Psoas muscle (tissue), 8 donors: ENCODE measurements at regions of chr2 and their contacts with region 1.

Region 1: GRCh38 chr2:80281049-80281448 is 23.5 kb downstream of the LRRTM1 start:
- DNase-seq: no peak
- ATAC-seq: peak in 1 of 4 donors; percentile 34
- H3K4me3 ChIP-seq: no peak overlapping the region
- H3K27ac ChIP-seq: no peak overlapping the region
- H3K4me1 ChIP-seq: no peaks in the 10 kb centered on the region
- H3K27me3 ChIP-seq: no peaks in the 10 kb centered on the region
- CTCF ChIP-seq: no peak

Region 2: GRCh38 chr2:80256782-80257167 is 24.3 kb before region 1 on chr2:
- intact Hi-C with region 1: loop called in 1 of 2 experiments (anchors 1 kb)
- DNase-seq: no peak
- ATAC-seq: no peak
- H3K4me3 ChIP-seq: no peak overlapping the region
- H3K27ac ChIP-seq: no peak overlapping the region
- H3K4me1 ChIP-seq: no peaks in the 10 kb centered on the region
- H3K27me3 ChIP-seq: no peaks in the 10 kb centered on the region
- CTCF ChIP-seq: no peak